MCF 10A (cell line): ENCODE measurements at regions of chr16 and their contacts with region 1.

Region 1: DNA sequence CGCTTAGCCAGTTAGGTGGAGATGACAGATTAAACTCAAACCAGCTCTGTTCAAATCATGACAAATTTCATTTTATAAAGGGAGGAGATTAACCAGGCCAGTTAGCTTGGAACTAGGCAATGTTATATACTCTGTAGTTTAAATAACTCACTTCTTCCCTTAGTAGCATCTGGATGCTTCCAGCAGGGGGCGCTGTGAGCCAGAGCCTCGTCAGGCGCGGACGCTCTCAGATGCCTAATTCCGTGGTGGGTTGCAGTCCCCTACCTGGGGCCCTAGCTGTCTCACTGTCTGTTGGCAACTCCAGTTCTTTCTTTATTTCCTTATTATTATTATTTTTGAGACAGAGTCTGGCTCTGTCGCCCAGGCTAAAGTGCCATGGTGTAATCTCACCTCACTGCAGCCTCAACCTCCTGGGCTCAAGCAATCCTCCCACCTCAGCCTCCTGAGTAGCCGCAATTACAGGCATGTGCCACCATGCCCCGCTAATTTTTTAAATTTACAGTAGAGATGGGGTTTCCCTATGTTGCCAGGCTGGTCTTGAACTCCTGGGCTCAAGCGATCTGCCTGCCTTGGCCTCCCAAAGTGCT is 17.3 kb upstream of the WFDC1 start:
- DNase-seq: peak; percentile 63
- H3K4me3 Mint-ChIP-seq: no peak overlapping the region
- H3K27ac Mint-ChIP-seq: no peak overlapping the region
- H3K4me1 Mint-ChIP-seq: no peaks in the 10 kb centered on the region
- H3K27me3 Mint-ChIP-seq: peaks cover 11% of the 10 kb centered on the region
- CTCF ChIP-seq: peak; percentile 80

Region 2: GRCh38 chr16:84266451-84266850 is 10.9 kb before region 1 on chr16:
- CTCF ChIA-PET with region 1: interaction called, 43 read pairs
- POLR2A ChIA-PET with region 1: interaction called, 5 read pairs
- intact Hi-C with region 1: no loop called
- DNase-seq: peak; percentile 67
- H3K4me3 Mint-ChIP-seq: no peak overlapping the region
- H3K27ac Mint-ChIP-seq: no peak overlapping the region
- H3K4me1 Mint-ChIP-seq: no peaks in the 10 kb centered on the region
- H3K27me3 Mint-ChIP-seq: no peaks in the 10 kb centered on the region
- CTCF ChIP-seq: no peak

Region 3: DNA sequence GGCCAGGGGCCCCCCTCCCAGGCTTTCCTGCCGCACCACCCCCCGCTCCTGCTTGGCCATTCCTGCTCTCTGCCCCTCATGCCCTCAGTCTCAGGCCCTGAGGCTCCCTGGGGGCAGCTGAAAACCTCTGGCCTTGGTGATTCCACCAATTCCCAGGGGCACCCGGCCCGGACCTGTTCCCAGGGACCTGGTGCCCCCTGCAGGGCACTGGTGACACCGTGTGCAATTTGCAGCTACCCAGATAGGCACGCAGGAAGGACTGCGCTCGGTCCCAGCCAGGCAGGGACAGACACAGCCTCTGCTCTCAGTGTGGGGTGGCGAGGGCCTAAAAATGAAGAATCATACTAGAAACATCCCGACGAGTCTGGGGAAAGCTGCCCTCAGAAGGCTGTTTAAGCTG is 30.8 kb after region 1 on chr16:
- CTCF ChIA-PET with region 1: interaction called, 6 read pairs
- POLR2A ChIA-PET with region 1: no interaction called
- intact Hi-C with region 1: loop called (anchors 1 kb)
- DNase-seq: peak; percentile 61
- H3K4me3 Mint-ChIP-seq: no peak overlapping the region
- H3K27ac Mint-ChIP-seq: no peak overlapping the region
- H3K4me1 Mint-ChIP-seq: no peaks in the 10 kb centered on the region
- H3K27me3 Mint-ChIP-seq: peaks cover 53% of the 10 kb centered on the region
- CTCF ChIP-seq: peak; percentile 39

Region 4: DNA sequence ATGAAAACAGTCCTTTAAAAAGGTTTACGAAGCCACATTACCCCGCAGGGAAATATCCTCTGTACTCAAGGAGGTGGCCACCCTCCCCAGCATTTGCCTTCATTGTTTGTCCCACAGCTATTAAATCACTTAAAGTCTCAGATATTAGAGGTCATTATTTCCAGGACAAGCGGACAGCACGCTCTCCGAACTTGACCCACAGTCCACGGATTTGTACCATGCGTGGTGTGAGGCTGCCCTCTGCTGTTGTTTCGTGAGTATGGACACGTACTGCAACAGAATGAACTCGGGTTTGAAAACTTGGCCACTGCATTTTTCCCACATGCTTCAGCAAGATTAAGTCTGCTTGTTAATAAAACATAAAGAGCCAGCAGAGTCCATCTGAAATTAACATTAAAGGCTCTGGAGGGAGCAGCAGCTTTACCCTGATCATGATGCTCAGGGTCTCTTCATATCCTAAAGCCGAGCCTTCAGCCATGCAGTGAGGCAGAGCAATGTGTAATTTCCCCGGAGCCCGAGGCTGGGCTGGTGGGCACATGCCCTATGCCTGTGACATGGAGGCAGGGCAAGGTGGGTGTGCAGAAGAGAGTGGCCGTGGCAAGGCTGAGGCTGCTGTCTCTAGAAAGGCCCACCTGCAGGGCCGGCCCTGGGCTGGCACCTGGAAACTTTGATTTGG is 207.4 kb after region 1 on chr16:
- CTCF ChIA-PET with region 1: interaction called, 21 read pairs
- POLR2A ChIA-PET with region 1: no interaction called
- intact Hi-C with region 1: loop called (anchors 2 kb)
- DNase-seq: peak; percentile 45
- H3K4me3 Mint-ChIP-seq: no peak overlapping the region
- H3K27ac Mint-ChIP-seq: no peak overlapping the region
- H3K4me1 Mint-ChIP-seq: no peaks in the 10 kb centered on the region
- H3K27me3 Mint-ChIP-seq: no peaks in the 10 kb centered on the region
- CTCF ChIP-seq: peak; percentile 49

Region 5: DNA sequence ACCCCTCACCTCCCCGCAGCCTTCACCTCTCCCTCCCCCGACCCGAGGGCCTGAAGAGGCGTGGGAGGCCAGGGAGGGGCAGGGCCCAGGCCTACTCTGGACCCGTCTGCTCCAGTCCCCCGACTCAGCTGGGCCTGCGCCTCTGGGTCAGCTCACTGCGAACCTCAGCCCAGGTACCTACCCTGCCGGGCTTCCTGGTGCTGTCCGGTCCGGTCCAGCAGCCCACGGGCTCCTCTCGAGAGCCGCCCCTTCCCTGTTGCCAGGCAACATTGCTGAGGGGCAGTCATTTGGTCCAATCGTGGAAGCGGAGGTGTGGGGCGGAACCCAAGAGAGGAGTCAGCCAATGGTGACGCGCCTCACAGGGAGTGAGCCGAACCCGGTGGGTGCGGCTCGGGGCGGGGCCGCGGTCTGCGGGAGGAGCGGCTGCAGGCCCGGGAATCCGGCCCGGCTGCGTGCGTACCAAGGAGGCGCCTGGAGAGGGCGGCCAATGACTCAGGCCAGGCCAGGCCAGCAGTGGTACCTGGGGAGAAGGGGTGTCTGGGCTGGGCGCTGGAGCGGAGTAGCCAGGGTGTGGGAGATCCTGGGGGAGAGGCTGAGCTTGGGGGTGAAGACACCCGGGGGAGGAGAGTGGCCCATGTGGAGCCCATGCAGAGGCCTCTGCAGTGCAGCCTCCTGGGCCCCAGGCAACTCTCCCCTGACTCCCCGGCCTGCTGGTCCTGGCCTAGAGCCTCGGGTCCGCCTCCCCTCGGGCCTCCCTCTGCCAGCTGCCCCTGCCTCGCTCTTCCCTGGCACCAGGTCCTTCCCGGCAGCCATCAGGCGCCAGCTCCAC is 227.3 kb after region 1 on chr16 and contains the start of gene MEAK7:
- CTCF ChIA-PET with region 1: interaction called, 28 read pairs
- POLR2A ChIA-PET with region 1: no interaction called
- intact Hi-C with region 1: loop called (anchors 1 kb)
- DNase-seq: peak; percentile 99
- H3K4me3 Mint-ChIP-seq: peak within 1 kb of the TSS; percentile 84
- H3K27ac Mint-ChIP-seq: peak within 1 kb of the TSS; percentile 88
- H3K4me1 Mint-ChIP-seq: peaks cover 52% of the 10 kb centered on the region
- H3K27me3 Mint-ChIP-seq: no peaks in the 10 kb centered on the region
- CTCF ChIP-seq: no peak
- total RNA-seq, gene MEAK7: 62.3 and 66.8 TPM in 2 replicates